HEK293 (cell line): ENCODE measurements at regions of chr2 and their contacts with region 1.

Region 1: DNA sequence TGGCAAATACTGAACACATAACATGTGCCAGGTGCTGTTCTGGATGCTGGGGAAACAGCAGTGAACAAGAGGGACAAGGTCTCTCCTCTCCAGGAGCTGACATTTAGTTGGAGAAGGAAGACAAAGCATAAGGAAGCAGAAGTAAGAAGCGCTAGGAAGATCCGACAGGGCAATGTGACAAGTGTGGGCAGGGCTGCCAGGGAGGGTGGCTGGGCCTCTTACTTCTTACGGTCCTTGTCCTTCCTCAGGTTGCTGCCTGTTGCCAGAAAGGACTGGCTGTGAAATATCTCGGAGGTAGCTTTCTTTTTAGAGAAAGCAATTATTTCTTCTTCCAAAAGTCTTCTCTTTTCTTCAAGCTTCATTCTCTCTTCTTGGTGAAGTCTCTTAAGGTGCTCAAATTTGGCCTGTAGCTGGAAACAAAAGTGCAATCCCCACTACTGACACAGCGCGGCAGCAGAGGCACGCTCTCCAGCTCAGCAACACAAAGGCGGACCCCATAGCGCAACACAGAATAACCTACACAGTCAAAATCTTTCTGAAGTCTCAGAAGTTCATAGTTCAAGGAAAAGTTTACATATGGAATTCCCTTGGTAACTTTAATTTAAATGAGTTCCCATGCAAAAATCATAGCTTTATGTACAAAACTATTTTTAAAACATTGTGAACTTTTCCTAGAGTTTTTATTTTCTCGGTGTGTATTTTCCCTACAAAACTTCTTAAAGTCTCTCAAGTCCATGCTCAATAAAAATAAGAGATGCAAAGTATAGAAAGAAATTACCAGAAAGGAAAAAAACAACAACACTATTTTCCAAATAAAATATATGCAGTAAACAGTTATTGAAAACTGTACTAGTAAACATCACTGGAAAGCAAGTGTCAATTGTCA is 67.7 kb downstream of the SEPTIN10 start:
- H3K4me3 ChIP-seq: no peak overlapping the region
- H3K27ac ChIP-seq: no peak overlapping the region
- H3K4me1 ChIP-seq: no peaks in the 10 kb centered on the region
- CTCF ChIP-seq: peak; percentile 88

Region 2: GRCh38 chr2:109448946-109449788 is 96.9 kb before region 1 on chr2:
- CTCF ChIA-PET with region 1: no interaction called
- POLR2A ChIA-PET with region 1: no interaction called
- H3K4me3 ChIP-seq: no peak overlapping the region
- H3K27ac ChIP-seq: no peak overlapping the region
- H3K4me1 ChIP-seq: no peaks in the 10 kb centered on the region
- CTCF ChIP-seq: no peak

Region 3: DNA sequence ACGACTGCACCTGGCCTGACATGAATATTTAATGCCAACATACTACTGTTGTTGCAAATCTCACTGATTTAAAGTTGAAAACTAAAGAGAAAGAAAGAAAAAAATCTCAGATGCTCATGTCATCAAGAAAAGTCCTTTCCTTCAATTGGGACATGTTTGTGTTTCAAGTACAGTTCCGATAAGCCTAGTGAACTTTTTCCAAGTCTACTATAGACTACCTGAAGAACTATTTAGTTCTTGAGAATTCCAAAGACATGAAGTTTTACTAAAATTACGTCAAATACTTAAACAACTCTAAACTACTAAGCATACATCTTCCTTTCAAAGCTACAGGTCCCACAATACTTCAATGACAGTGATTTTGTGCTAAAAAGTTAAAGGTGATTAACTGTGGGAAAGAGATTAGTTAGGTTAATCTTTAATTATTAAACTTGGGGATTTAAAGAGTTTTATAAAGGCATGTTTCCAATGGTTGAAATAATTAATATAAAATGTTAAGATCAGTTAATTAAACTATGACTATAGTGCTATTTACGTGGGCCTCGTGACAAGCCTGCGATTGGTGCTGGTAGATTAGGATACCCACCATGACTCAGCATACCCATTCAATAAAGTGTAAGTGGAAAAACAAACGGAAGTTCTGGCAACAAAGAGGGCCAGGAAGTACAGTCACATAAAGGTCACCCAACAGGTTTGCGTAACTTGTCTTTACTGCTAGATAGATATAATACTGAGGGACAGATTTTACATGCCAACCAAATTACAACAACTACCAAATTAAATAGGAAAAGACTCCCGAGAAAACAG is 12.2 kb after region 1 on chr2:
- CTCF ChIA-PET with region 1: interaction called, 36 read pairs
- POLR2A ChIA-PET with region 1: no interaction called
- H3K4me3 ChIP-seq: no peak overlapping the region
- H3K27ac ChIP-seq: no peak overlapping the region
- H3K4me1 ChIP-seq: no peaks in the 10 kb centered on the region
- CTCF ChIP-seq: no peak

Region 4: GRCh38 chr2:109613922-109614714 is 68.0 kb after region 1 on chr2 and contains the starts of genes SEPTIN10 and SOWAHC:
- CTCF ChIA-PET with region 1: interaction called, 76 read pairs
- POLR2A ChIA-PET with region 1: interaction called, 10 read pairs
- H3K4me3 ChIP-seq: peak within 1 kb of the TSS; percentile 69
- H3K27ac ChIP-seq: peak within 1 kb of the TSS; percentile 95
- H3K4me1 ChIP-seq: peaks cover 11% of the 10 kb centered on the region
- CTCF ChIP-seq: no peak

Region 5: DNA sequence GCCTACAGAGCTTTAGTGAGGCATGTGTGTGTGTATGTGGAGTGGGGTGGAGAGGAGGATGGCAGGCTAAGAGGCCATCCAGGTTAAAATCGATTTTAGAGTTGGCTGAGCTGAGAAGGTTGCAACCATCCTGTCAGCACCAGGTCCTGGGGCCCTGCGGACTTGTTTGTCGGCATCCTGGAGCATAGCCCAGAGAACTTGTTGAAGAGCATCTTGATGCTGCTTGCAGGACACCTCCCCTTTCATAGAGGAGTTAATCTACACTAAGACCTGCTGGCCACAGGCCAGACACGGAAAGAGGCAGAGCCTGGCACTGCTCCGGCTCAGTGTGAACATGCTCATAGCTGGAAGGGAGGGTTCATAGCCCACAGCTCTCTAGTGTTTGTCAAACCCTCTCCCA is 176.0 kb after region 1 on chr2:
- CTCF ChIA-PET with region 1: interaction called, 18 read pairs
- POLR2A ChIA-PET with region 1: no interaction called
- H3K4me3 ChIP-seq: no peak overlapping the region
- H3K27ac ChIP-seq: no peak overlapping the region
- H3K4me1 ChIP-seq: no peaks in the 10 kb centered on the region
- CTCF ChIP-seq: no peak